Activated T-helper 2 cell treated with anti-CD3 and anti-CD28 coated beads, Interferon-gamma antibody, Interleukin-2, Interleukin-4, amounts not matched to agents 10 μg/mL and 5 μg/mL and 100 μg/mL, durations not matched to agents 14 hours and 24 hours and 36 hours (primary cell): ENCODE measurements at regions of chr18 and their contacts with region 1.

Region 1: GRCh38 chr18:1585879-1586488 is 681.3 kb downstream of the ADCYAP1 start:
- DNase-seq: no peak
- H3K4me3 Mint-ChIP-seq: no peak overlapping the region
- H3K27ac Mint-ChIP-seq: no peak overlapping the region
- H3K4me1 Mint-ChIP-seq: no peaks in the 10 kb centered on the region
- H3K27me3 Mint-ChIP-seq: no peaks in the 10 kb centered on the region

Region 2: GRCh38 chr18:1965541-1965940 is 379.6 kb after region 1 on chr18:
- intact Hi-C with region 1: no loop called
- DNase-seq: no peak
- H3K4me3 Mint-ChIP-seq: no peak overlapping the region
- H3K27ac Mint-ChIP-seq: no peak overlapping the region
- H3K4me1 Mint-ChIP-seq: no peaks in the 10 kb centered on the region
- H3K27me3 Mint-ChIP-seq: no peaks in the 10 kb centered on the region

Region 3: GRCh38 chr18:2540575-2540974 is 954.6 kb after region 1 on chr18:
- intact Hi-C with region 1: loop called (anchors 5 kb)
- DNase-seq: no peak
- H3K4me3 Mint-ChIP-seq: no peak overlapping the region
- H3K27ac Mint-ChIP-seq: no peak overlapping the region
- H3K4me1 Mint-ChIP-seq: no peaks in the 10 kb centered on the region
- H3K27me3 Mint-ChIP-seq: no peaks in the 10 kb centered on the region